WTC11 (cell line): ENCODE measurements at regions of chr21 and their contacts with region 1.

Region 1: DNA sequence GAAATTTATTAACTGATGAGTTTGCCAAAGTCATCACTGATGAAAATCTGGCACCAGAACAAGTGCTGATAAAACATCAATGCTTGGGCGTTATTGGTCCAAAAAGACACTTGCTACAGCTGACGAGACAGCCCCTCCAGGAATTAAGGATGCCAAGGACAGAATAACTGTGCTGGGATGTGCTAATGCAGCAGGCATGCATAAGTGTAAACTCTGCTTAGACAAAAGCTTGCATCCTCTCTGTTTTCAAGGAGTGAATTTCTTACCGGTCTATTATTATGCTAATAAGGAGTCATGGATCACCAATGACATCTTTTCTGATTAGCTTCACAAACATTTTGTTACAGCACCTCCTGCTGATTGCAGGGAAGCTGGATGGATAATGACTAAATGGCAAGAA is 402.0 kb downstream of the LTN1 start:
- DNase-seq: no peak
- ATAC-seq: peak; percentile 90
- H3K4me3 Mint-ChIP-seq: no peak overlapping the region
- H3K27ac Mint-ChIP-seq: peak overlapping the region; percentile 86
- H3K4me1 Mint-ChIP-seq: peaks cover 54% of the 10 kb centered on the region
- H3K27me3 Mint-ChIP-seq: no peaks in the 10 kb centered on the region
- CTCF ChIP-seq: no peak

Region 2: DNA sequence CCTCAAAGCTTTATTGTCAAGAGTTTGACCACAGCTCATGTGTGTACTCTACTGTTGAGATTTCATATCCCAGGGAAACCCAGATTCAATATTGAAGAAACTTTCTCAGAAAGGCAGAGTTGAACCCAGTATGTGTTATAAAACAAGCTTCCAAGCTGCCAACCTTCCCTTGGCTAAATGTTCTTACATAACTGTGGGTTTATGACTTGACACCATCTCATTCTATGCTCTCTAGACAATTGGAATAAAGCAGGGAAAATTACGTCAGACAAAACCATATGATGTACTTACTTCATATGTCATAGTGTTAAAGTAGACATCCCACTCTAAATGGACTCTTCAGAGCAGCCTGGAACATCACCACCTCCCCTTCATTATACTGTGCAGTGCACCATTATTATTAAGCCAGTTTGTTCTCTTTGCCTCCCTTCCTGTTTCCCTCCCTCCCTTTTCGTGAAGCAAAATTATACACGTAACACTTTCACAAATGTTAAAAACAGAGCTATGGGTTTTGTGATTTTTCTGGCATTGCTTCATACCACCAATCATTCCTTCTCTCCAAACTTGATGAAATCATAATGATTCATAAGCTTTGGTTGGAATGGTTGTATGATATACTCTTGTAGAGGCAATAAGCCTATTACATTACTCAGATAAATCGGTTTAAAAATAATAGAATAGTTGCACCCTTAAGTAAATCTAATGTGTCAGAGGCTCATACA is 105.2 kb before region 1 on chr21:
- CTCF ChIA-PET with region 1: no interaction called
- POLR2A ChIA-PET with region 1: no interaction called
- DNase-seq: no peak
- ATAC-seq: no peak
- H3K4me3 Mint-ChIP-seq: no peak overlapping the region
- H3K27ac Mint-ChIP-seq: no peak overlapping the region
- H3K4me1 Mint-ChIP-seq: peaks cover 6% of the 10 kb centered on the region
- H3K27me3 Mint-ChIP-seq: no peaks in the 10 kb centered on the region
- CTCF ChIP-seq: no peak

Region 3: GRCh38 chr21:28516991-28517592 is 73.6 kb before region 1 on chr21:
- CTCF ChIA-PET with region 1: interaction called, 14 read pairs
- POLR2A ChIA-PET with region 1: no interaction called
- DNase-seq: peak; percentile 88
- ATAC-seq: peak; percentile 100
- H3K4me3 Mint-ChIP-seq: no peak overlapping the region
- H3K27ac Mint-ChIP-seq: peak overlapping the region; percentile 60; the same call in 1 of the 2 replicates
- H3K4me1 Mint-ChIP-seq: peaks cover 12% of the 10 kb centered on the region
- H3K27me3 Mint-ChIP-seq: no peaks in the 10 kb centered on the region
- CTCF ChIP-seq: peak; percentile 45; the same call in 1 of the 2 replicates

Region 4: DNA sequence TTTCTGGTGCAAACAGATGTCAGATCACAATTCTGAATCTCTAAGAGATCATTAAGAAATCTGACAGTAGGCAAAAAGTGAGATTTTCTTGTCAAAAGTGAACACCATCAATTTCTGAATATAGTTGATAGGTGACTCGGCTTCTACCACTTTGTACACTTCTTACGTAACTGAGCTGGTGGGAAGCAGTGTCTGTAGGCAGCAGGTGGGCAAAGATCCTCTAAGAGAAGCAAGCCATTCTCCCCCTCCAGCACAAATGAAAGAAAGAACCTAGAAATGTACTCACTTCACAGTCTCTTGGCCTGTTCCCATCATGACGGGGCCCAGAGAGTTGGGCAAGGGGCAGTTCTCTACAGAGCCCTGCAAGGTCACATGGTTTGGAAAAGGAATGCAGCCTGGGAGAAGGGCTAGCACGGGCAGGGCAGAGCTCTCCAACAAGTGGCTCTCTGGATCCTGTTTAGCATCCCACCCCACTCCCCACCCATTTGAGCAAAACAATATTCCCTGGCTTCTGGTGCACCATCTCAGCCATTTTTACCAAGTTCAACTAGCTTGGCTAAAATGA is 10.6 kb before region 1 on chr21:
- CTCF ChIA-PET with region 1: interaction called, 11 read pairs
- POLR2A ChIA-PET with region 1: no interaction called
- DNase-seq: peak; percentile 16
- ATAC-seq: peak; percentile 93
- H3K4me3 Mint-ChIP-seq: 0 out of 2 replicates have a peak overlapping the region, but pooled peaks have one; percentile 3
- H3K27ac Mint-ChIP-seq: peak overlapping the region; percentile 93
- H3K4me1 Mint-ChIP-seq: peaks cover 26% of the 10 kb centered on the region
- H3K27me3 Mint-ChIP-seq: no peaks in the 10 kb centered on the region
- CTCF ChIP-seq: no peak